ENCODE measurements at regions of chr6 and their contacts with region 1.

Region 1: GRCh38 chr6:41027799-41028628 is 11.0 kb downstream of the UNC5CL start:
- DNase-seq: peak; percentile 94
- ATAC-seq: peak; percentile 97

Region 2: DNA sequence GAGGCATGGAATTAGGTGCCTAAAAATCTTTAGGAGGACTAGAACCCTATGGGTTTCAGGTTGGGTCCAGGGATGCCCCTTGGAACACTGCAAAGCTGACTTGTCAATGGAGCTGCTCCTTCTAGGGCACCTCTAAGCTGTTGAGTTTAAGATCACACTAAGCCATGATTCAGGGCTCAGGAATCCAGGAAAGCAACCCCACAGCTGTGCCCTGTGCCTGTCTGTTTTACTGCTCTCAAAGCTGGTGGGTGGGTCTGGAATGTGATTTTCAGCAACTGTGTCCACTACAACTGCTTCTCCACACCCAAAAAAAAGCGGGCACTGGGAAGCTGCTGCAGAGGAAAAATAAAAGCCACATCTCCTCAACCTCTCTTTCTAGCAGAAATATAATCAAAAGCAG is 783.3 kb before region 1 on chr6:
- intact Hi-C with region 1: loop called (anchors 5 kb)
- DNase-seq: no peak
- ATAC-seq: no peak

Region 3: DNA sequence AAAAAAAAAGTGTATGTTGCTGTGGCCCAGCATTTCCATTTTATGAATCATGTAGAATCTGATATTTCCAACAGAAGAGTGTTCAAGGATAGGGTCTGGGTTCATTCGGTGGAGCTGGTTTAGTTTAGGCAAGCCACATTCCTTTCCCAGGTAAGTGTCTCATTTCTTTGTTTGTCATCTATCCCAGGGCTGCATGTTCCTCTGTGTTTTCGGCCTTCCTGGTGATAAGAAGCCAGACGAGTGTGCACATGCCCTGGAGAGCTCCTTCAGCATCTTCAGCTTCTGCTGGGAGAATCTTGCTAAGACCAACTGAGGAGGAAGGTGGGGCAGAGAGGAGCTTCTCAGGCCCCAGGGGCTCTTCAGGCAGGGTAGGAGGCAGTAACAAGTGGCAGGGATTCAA is 83.0 kb after region 1 on chr6:
- intact Hi-C with region 1: no loop called
- DNase-seq: no peak
- ATAC-seq: no peak